OCI-LY7 (cell line): ENCODE measurements at regions of chr21 and their contacts with region 1.

Region 1: GRCh38 chr21:29024474-29025327 is at the start of gene USP16:
- DNase-seq: peak; percentile 97
- H3K4me3 ChIP-seq: peak within 1 kb of the TSS; percentile 85
- H3K27ac ChIP-seq: peak within 1 kb of the TSS; percentile 79
- H3K4me1 ChIP-seq: peaks cover 32% of the 10 kb centered on the region
- CTCF ChIP-seq: no peak
- total RNA-seq, gene USP16: 22.8 and 23.1 TPM in 2 replicates

Region 2: GRCh38 chr21:28550057-28550825 is 474.5 kb before region 1 on chr21:
- CTCF ChIA-PET with region 1: no interaction called
- POLR2A ChIA-PET with region 1: no interaction called
- intact Hi-C with region 1: no loop called
- DNase-seq: no peak
- H3K4me3 ChIP-seq: no peak overlapping the region
- H3K27ac ChIP-seq: no peak overlapping the region
- H3K4me1 ChIP-seq: no peaks in the 10 kb centered on the region
- CTCF ChIP-seq: no peak

Region 3: GRCh38 chr21:28992526-28993292 is 32.0 kb before region 1 on chr21 and contains the start of gene LTN1:
- CTCF ChIA-PET with region 1: no interaction called
- POLR2A ChIA-PET with region 1: interaction called, 23 read pairs
- intact Hi-C with region 1: loop called (anchors 2 kb)
- DNase-seq: peak; percentile 99
- H3K4me3 ChIP-seq: peak within 1 kb of the TSS; percentile 90
- H3K27ac ChIP-seq: peak within 1 kb of the TSS; percentile 83
- H3K4me1 ChIP-seq: peaks cover 27% of the 10 kb centered on the region
- CTCF ChIP-seq: no peak
- total RNA-seq, gene LTN1: 17.2 and 18.4 TPM in 2 replicates

Region 4: DNA sequence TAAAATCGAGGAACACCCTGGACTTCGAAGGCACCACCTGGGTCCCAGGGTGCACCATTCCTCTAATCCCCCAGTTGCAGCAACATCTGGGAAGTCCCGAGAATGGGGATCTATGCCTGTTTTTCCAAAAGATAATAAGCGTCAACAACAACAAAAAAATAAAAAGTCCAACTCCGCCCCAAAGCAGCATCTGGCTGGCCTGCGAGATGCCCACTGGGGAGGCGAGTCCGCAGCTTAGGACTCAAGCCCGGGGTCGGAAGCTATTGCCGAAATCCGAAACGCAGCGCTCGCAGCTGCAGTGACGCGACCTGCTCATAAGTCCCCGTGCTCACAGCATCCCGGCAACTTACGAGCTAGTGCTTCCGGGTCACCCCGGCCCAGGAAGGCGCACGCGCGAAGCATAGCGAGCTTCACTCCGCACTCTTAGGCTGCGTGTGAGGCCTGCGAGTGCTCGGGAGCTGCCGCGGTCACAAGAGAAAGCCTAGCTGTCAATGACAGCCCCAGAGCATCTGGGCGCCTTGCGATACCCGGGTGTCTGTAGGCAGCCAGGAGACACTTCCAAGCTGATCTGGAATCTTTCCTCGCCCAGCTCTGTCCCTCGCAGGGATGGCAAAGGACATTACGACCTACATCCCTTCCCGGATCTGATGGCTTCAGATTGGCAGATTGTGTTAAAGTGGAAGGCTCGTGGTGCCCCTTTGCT is 22.1 kb before region 1 on chr21:
- CTCF ChIA-PET with region 1: interaction called, 4 read pairs
- POLR2A ChIA-PET with region 1: interaction called, 71 read pairs
- intact Hi-C with region 1: loop called (anchors 2 kb)
- DNase-seq: peak; percentile 98
- H3K4me3 ChIP-seq: peak overlapping the region; percentile 76
- H3K27ac ChIP-seq: peak overlapping the region; percentile 77
- H3K4me1 ChIP-seq: peaks cover 5% of the 10 kb centered on the region
- CTCF ChIP-seq: no peak

Region 5: DNA sequence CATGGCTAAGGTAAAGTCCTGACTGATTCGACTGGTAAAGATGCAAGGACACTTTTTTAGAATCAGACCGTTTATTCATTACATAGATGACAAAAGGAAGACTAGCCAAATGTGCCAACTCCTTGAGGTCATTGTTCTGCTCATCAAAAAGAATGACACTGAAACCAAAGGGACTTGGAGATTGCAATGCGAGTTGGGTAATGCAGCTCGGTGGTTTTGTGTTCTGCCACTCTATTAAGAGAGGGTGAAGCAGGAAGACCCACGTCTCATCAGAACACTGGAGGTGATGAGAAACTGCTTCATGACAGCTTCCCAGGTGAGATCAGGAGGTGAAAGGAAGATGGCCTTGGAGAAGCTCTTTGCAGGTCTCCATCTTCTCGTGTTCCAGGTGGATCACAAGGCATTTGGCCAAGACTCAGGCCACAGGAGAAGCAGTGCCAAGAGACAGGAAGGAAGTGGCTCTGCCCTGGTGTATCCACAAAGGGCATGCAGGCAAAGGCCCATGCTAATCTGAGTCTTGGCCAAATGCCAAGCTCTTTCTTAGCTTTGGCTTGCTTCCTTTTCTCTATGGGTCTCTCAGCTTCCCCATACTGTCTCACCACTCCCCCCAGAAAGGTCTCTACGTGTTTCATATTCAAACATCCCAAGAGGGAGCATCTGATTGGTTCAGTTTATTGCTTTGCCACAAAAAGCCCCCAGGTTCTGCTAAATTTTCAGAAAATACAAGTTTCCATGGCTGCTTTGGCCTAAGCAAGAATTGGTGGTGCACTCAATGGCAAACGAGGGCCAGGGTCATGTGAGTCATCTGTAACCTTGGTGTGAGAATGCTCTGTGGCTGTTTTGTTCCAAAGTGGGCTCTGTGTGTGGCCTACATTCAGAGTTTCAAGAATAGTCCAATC is 54.4 kb after region 1 on chr21:
- CTCF ChIA-PET with region 1: no interaction called
- POLR2A ChIA-PET with region 1: interaction called, 35 read pairs
- intact Hi-C with region 1: loop called (anchors 1 kb)
- DNase-seq: peak; percentile 66
- H3K4me3 ChIP-seq: no peak overlapping the region
- H3K27ac ChIP-seq: peak overlapping the region; percentile 0
- H3K4me1 ChIP-seq: peaks cover 33% of the 10 kb centered on the region
- CTCF ChIP-seq: no peak

Region 6: DNA sequence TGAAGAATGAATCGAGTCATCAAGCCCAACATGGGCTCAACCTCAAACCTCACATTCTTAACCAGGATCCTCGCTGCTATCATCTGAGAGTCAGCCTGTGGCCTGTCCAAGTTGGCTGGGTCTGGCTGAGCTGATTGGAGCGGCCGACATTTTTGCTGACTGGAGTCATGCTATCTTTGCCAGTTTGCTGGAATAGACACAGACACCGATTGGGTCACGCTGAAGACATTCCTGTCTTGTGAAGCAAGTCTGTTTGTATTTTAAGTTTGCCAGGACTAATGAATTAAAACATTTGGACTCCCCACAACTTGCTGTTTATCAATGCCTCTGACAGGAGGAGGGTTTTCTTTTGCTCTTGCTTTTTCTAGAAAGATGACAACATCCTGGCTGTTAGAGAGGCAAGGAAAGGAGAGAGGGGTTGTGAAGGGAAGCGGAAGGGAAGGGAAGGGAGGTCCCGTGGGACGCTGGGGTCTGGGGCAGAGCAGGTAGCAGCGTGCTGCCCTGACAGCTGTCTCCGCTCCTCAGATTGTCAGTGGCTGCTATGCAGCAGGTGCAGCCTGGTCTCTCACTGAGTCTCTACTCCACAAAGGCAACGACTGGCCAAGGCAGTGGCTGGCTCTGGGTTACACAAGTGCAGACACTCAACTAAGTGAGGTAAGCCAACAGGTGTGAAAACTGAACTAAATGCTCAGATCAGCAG is 105.7 kb after region 1 on chr21 and contains the start of gene MAP3K7CL:
- CTCF ChIA-PET with region 1: no interaction called
- POLR2A ChIA-PET with region 1: no interaction called
- intact Hi-C with region 1: no loop called
- DNase-seq: no peak
- H3K4me3 ChIP-seq: no peak within 1 kb of the TSS
- H3K27ac ChIP-seq: no peak within 1 kb of the TSS
- H3K4me1 ChIP-seq: peaks cover 4% of the 10 kb centered on the region
- CTCF ChIP-seq: no peak
- total RNA-seq, gene MAP3K7CL: 2.1 and 7.8 TPM in 2 replicates